Activated naive CD4-positive, alpha-beta T cell treated with anti-CD3 and anti-CD28 coated beads, Interleukin-2, amount 10 ng/mL, durations not matched to agents 7 days and 5 days (primary cell): ENCODE measurements at regions of chr1 and their contacts with region 1.

Region 1: GRCh38 chr1:184664042-184664655 is 90.5 kb downstream of the EDEM3 start:
- DNase-seq: peak; percentile 58
- H3K4me3 Mint-ChIP-seq: no peak overlapping the region
- H3K27ac Mint-ChIP-seq: no peak overlapping the region
- H3K4me1 Mint-ChIP-seq: peaks cover 6% of the 10 kb centered on the region
- H3K27me3 Mint-ChIP-seq: peaks cover 40% of the 10 kb centered on the region

Region 2: DNA sequence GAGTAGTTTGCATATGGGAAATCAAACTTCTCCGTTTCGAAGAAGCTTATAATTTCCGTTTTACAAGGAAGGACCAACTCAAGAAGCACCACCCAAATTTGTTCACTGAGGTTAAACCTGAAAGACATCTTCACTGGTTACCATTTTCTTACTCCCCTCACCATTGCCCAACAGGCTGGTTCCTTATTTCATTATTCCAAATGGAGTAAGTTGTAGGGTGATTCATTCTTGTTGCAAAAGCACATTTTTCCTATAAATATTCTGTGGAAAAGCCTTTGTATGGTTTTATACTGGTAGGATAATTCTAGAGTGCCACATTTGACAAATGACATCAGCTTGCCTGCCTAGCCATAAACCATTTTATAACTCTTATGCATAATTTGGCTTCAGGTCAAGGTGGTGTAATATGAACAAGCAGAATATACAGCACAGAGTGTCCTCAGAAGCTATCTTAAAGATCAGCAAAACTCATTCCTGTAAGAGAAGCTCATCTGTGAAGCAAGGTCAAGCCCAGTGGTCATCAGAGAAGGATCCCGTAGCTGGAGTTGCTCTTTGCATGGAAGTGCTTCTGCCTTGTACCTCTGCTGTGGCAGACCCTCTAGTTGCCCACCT is 301.4 kb before region 1 on chr1:
- CTCF ChIA-PET with region 1: no interaction called
- DNase-seq: no peak
- H3K4me3 Mint-ChIP-seq: no peak overlapping the region
- H3K27ac Mint-ChIP-seq: no peak overlapping the region
- H3K4me1 Mint-ChIP-seq: no peaks in the 10 kb centered on the region
- H3K27me3 Mint-ChIP-seq: peaks cover 12% of the 10 kb centered on the region

Region 3: GRCh38 chr1:184407816-184408537 is 256.2 kb before region 1 on chr1:
- CTCF ChIA-PET with region 1: no interaction called
- DNase-seq: no peak
- H3K4me3 Mint-ChIP-seq: no peak overlapping the region
- H3K27ac Mint-ChIP-seq: no peak overlapping the region
- H3K4me1 Mint-ChIP-seq: no peaks in the 10 kb centered on the region
- H3K27me3 Mint-ChIP-seq: no peaks in the 10 kb centered on the region

Region 4: DNA sequence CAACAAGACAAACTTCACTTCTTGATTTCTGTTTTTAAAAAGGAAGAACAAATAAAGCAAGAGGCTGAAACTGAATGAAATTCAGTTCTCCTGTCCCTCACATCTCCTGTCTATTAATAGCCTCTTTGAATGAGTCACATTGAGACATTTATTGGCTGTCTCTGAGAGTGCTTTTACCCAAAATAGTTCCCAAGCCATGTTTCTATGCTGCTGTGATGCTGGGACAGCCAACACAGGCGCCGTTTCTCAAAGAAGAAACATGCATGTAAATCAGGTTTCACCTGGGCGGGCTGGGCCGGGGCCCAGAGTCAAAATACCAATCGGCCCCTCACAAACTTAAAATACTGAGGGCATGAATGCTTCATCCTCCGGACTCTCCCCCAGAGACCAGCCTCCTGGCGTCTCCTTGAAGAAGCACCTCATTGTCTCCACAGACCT is 14.7 kb before region 1 on chr1:
- CTCF ChIA-PET with region 1: interaction called, 14 read pairs
- DNase-seq: no peak
- H3K4me3 Mint-ChIP-seq: no peak overlapping the region
- H3K27ac Mint-ChIP-seq: no peak overlapping the region
- H3K4me1 Mint-ChIP-seq: no peaks in the 10 kb centered on the region
- H3K27me3 Mint-ChIP-seq: peaks cover 4% of the 10 kb centered on the region